ENCODE measurements at regions of chr3 and their contacts with region 1.

Region 1: GRCh38 chr3:43246976-43247375 is 39.4 kb upstream of the SNRK start:
- DNase-seq: peak; percentile 75
- H3K4me3 ChIP-seq: no peak overlapping the region
- H3K27ac ChIP-seq: peak overlapping the region; percentile 51
- H3K4me1 ChIP-seq: peaks cover 28% of the 10 kb centered on the region
- CTCF ChIP-seq: no peak

Region 2: DNA sequence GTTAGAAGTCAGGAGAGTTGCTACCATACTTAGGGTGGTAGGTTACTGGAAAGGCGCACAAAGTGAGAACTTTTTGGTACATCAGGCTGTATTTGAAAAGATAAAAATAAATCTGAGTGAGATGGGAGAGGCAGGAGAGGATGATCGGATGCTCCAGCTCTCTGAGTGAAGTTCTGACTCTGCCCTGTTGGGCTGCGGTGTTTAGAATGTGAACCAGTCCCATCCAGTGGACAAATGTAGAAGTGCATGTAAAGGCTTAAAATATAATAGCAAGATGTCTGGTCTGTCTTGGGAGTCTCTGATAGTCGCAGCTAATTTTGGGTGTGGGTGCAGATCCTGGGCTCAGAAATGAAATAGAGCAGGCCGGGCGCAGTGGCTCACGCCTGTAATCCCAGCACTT is 407.4 kb before region 1 on chr3:
- CTCF ChIA-PET with region 1: no interaction called
- POLR2A ChIA-PET with region 1: no interaction called
- intact Hi-C with region 1: no loop called
- DNase-seq: peak; percentile 63
- H3K4me3 ChIP-seq: no peak overlapping the region
- H3K27ac ChIP-seq: no peak overlapping the region
- H3K4me1 ChIP-seq: no peaks in the 10 kb centered on the region
- CTCF ChIP-seq: peak; percentile 75

Region 3: GRCh38 chr3:42906070-42906847 is 340.7 kb before region 1 on chr3 and contains the start of gene ZNF662:
- CTCF ChIA-PET with region 1: no interaction called
- POLR2A ChIA-PET with region 1: no interaction called
- intact Hi-C with region 1: no loop called
- DNase-seq: no peak
- H3K4me3 ChIP-seq: no peak within 1 kb of the TSS
- H3K27ac ChIP-seq: no peak within 1 kb of the TSS
- H3K4me1 ChIP-seq: no peaks in the 10 kb centered on the region
- CTCF ChIP-seq: no peak
- total RNA-seq, gene ZNF662: not detected in 2 replicates

Region 4: GRCh38 chr3:43286115-43286840 is 39.3 kb after region 1 on chr3 and contains the start of gene SNRK:
- CTCF ChIA-PET with region 1: no interaction called
- POLR2A ChIA-PET with region 1: no interaction called
- intact Hi-C with region 1: loop called (anchors 2 kb)
- DNase-seq: peak; percentile 85
- H3K4me3 ChIP-seq: peak within 1 kb of the TSS; percentile 73
- H3K27ac ChIP-seq: no peak within 1 kb of the TSS
- H3K4me1 ChIP-seq: peaks cover 33% of the 10 kb centered on the region
- CTCF ChIP-seq: peak; percentile 36; the same call in 1 of the 2 replicates
- total RNA-seq, gene SNRK: 13.2 and 15.5 TPM in 2 replicates